H1 (cell line): ENCODE measurements at regions of chr3 and their contacts with region 1.

Region 1: DNA sequence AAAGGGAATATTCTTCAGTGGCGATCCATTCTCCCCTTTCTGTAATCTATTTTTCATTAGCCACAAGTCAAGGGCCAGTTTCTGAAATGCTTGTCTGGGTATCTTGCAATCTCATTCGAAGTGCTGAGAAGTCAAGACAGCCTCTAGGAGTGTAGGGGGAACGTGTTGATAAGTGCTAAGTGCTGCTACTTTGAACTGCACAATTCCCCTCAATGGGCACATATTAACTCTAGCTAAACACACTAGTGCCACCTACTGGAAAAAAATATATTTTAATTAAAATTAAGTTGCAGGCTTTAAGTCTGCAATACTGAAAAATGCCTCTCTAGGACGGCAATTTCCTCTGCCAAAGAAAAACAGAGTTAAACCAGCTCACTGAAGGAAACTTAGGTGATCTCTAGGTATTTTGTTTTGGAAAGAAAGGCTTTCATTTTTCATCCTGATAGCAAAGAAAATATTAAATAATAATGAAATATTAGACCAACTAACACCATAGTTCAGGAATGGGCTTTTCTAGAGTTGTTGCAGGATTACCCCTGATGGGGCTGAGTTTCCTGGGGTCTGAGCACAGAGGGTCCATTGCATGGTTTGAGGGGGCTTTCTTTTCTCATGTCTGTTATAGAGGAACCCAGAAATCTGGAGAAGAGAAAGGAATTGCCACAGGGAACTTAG is 181.9 kb upstream of the KBTBD8 start:
- DNase-seq: peak in 1 of 2 experiments; percentile 27
- H3K4me3 ChIP-seq: no peak overlapping the region
- H3K27ac ChIP-seq: no peak overlapping the region
- H3K4me1 ChIP-seq: peaks cover 1 to 11% (median 7%) of the 10 kb centered on the region in 4 experiments; a peak in 5 of 7 replicates
- H3K27me3 ChIP-seq: no peaks in the 10 kb centered on the region
- CTCF ChIP-seq: peak in 2 of 3 experiments; percentile 39 to 60; a peak in 3 of 4 replicates
- EP300 ChIP-seq: no peak
- POLR2A ChIP-seq: no peak
- RAD21 ChIP-seq: peak; percentile 85 to 88

Region 2: DNA sequence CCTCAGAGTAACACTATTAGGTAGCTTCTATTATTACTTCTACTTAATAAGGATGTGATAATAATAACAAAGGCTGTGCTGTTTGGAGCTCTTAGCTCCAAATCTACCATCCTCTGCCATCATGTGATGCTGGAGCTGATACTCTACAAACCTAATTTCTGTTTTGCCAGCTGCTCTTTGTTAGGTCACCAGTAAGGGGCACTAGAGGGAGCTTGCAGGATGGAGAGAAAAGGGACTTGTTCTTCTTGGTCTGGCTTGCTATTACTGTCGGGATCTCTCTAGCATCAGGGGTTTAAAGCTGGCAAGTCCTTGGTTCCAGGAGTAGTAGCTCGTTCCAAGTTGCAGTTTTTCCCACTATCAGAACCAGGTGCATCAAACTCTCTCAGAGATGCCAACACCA is 13.0 kb before region 1 on chr3:
- CTCF ChIA-PET with region 1: interaction called, 28 read pairs
- POLR2A ChIA-PET with region 1: no interaction called
- DNase-seq: no peak
- H3K4me3 ChIP-seq: no peak overlapping the region
- H3K27ac ChIP-seq: no peak overlapping the region
- H3K4me1 ChIP-seq: peaks cover 0 to 6% (median 3%) of the 10 kb centered on the region in 4 experiments; a peak in 4 of 7 replicates
- H3K27me3 ChIP-seq: no peaks in the 10 kb centered on the region
- CTCF ChIP-seq: peak in 2 of 3 experiments; percentile 72 to 86; a peak in 3 of 4 replicates
- EP300 ChIP-seq: no peak
- POLR2A ChIP-seq: no peak
- RAD21 ChIP-seq: peak; percentile 57 to 77

Region 3: GRCh38 chr3:66948041-66948440 is 131.8 kb after region 1 on chr3:
- CTCF ChIA-PET with region 1: no interaction called
- POLR2A ChIA-PET with region 1: no interaction called
- DNase-seq: no peak
- H3K4me3 ChIP-seq: no peak overlapping the region
- H3K27ac ChIP-seq: no peak overlapping the region
- H3K4me1 ChIP-seq: no peaks in the 10 kb centered on the region; a peak in 1 of 7 replicates
- H3K27me3 ChIP-seq: peaks cover 0 to 1% (median 0%) of the 10 kb centered on the region in 4 experiments; a peak in 2 of 7 replicates
- CTCF ChIP-seq: no peak
- EP300 ChIP-seq: no peak
- POLR2A ChIP-seq: no peak
- RAD21 ChIP-seq: no peak